Right ventricle myocardium inferior (tissue), 1 donor: ENCODE measurements at regions of chr9 and their contacts with region 1.

Region 1: GRCh38 chr9:127734747-127735529 is at the start of gene TOR2A:
- DNase-seq: peak; percentile 99
- ATAC-seq: peak; percentile 96
- total RNA-seq, gene TOR2A: 3.8 TPM

Region 2: DNA sequence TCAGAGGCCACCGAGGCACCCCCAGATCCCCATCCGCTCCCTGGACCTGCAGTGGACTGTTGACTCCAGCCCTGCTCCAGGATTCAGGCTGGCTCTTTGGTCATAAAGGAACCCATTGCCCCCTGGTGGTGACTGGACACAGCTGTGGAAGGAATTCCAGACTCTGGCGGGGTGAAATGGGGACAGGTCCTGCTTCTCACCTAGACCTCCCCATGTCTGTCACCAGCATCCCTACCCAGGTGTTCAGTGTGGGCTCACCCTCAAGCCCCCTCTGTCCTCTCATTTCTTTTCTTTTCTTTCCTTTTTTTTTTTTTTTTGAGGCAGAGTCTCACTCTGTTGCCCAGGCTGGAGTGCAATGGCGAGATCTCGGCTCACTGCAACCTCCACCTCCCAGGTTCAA is 148.4 kb before region 1 on chr9:
- intact Hi-C with region 1: loop called (anchors 2 kb)
- DNase-seq: peak; percentile 84
- ATAC-seq: peak; percentile 92

Region 3: GRCh38 chr9:127694890-127695720 is 39.8 kb before region 1 on chr9:
- intact Hi-C with region 1: no loop called
- DNase-seq: no peak
- ATAC-seq: no peak

Region 4: DNA sequence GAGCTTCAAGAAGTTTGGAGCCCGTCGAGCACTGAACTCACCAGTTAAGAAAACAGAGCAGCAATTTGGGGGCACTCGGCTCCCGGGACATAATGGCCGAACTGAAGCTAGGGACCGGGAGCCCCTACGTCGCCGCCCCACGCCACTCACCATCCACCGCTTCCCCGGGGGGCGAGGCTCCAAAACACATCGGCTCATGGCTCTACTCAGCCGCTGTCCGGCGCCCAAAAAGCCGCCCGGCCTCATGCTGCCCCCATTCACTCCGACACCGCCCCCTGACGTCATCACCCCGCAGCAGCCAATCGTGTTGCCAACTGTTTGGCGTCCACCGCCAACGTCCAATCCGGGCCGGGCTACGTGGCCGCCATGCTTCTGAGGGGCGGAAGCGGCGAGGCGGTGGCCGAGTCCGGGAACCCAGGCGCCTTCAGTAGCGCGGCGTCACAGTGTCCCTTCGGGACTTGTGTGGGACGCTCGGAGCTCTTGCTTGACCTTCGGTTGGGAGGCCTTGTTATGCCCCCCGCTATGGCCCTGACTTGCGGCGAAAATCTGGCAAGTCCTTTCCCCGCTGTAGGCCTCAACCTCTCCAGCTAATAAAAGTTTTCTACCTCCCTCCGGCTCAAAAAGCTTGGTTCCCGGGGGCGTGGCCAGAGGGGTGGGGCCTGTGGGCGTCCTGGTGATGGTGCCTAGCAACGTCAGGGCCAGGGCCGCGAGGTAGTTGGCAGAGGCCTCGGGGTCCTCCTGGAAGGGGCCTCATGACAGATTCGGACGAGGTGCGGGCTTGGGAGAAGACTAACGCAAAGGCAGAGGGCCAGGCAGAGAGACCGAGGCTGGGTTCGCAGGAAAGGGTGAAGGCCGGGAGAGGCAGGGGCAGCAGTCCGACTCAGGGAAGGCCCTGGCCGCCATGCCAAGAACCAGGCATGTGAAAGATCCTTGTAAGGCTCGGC is 19.3 kb before region 1 on chr9 and contains the starts of genes PTRH1 and TTC16:
- intact Hi-C with region 1: no loop called
- DNase-seq: peak; percentile 99
- ATAC-seq: peak; percentile 96
- total RNA-seq, gene PTRH1: 14.2 TPM
- total RNA-seq, gene TTC16: 0.30 TPM

Region 5: DNA sequence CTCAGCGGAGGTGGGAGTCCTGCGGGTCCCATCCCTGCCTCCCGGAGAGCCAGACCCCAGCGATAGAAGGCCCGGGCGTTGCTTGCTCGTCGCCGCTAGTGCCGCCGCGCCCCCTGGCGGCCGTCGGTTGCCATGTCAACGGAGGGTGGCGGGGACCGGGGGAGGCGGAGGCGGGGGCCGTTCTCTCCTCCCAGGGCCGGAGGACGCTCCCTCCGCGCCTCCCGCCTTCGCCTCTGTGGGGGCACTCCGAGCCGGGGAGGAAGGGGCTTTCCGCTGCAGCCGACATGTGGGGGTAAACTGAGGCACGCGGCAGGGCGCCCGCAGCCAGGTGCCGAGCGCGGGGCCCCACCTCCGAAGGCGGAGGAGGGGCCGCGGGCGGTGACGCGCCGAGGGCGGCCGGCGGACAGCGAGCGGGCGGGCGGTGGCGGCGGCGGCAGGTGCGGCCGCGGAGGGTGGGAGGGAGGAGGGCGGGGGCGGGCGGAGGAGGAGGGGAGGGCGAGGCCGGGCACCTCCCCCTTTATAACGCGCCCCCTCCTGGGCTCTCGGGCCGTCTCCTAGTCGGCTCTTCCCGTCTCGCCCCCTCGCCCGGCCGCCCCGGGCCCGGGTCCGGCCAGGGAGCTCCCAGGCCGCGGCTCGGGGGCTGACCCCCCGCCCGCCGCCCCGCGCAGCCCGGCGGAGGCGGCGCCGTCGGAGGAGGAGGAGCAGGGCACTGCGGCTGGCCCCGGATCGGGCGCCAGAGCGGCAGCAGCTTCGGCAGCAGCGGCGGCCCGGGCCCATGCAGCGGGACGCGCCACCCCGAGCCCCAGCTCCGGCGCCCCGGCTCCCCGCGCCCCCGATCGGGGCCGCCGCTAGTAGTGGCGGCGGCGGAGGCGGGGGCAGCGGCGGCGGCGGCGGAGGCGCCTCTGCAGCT is 50.3 kb after region 1 on chr9:
- intact Hi-C with region 1: loop called (anchors 1 kb)
- DNase-seq: peak; percentile 95
- ATAC-seq: peak; percentile 70

Region 6: DNA sequence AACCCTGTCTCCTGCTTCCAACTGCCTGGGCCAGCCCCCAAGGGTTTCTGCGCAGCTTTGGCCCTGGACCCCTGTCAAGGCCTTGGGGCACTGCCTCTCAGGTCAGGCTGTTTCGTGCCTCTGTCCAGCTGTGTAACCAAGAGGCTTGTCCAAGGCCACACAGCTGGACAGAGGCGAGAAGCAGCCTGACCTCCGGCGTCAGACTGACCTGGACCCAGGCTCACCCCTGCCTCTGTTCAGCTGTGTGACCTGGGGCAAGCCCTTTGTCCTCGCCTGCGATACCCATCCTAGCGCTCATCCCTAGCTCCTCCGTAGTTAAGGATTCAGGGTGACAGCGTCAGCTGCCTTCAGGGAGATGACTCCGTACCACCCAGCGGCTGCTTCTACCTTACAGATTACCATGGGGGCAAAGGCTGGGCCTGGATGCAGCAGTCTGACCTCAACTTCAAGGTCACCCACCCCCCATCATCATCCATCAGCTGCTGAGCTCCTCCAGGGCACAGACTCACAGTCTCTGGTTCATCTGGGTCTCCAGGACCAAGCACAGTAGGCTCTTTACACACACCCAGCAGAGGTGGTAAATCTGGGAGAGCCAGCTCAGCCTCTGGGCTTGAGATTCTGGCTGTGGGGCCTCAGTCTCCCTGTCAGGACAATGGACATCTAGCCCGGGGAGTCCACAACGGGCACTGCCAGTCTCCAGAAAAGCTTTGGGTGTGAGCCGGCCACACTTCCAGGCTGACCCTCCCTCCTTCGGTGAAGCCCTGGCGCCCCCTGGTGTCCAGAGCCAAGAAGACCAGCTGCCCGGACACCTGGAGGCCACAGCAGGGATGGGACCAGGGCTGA is 134.6 kb after region 1 on chr9:
- intact Hi-C with region 1: loop called (anchors 1 kb)
- DNase-seq: peak; percentile 96
- ATAC-seq: peak; percentile 78